ENCODE measurements at regions of chr7 and their contacts with region 1.

Region 1: DNA sequence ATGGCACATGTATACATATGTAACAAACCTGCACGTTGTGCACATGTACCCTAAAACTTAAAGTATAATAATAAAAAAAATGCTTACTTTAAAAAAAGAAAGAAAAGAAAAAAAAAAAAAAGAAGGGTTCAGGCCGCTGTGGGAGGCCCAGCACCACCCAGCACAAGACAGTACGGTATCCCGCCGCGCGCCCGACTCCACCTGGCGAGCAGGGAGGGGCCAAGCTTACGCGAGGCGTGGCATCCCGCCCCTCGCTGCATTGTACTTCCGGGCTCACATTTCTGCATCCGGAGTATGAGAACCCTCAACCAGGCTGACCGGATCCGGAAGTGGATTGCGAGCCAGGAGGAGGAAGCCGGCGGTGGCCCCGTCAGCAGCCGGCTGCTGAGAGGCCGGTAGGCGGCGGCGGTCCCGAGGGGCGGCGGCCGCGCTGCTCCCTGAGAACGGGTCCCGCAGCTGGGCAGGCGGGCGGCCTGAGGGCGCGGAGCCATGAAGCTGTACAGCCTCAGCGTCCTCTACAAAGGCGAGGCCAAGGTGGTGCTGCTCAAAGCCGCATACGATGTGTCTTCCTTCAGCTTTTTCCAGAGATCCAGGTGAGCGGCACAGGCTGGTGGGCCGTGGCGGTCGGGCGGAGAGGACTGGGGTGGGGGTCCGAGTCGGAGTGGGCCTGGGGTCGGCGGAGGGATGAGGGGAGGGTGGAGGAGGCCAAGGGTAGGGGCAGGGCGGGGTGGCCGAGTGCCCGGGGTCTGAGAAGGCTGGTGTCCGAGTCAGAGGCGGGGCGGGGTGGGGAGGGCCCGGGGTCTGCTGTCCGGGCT is at the start of gene YKT6:
- H3K4me3 ChIP-seq: peak within 1 kb of the TSS; percentile 100
- H3K27ac ChIP-seq: peak within 1 kb of the TSS; percentile 62; the same call in 1 of the 2 replicates
- H3K4me1 ChIP-seq: no peaks in the 10 kb centered on the region
- CTCF ChIP-seq: peak; percentile 85

Region 2: GRCh38 chr7:44065436-44066118 is 135.3 kb before region 1 on chr7 and contains the start of gene PGAM2:
- CTCF ChIA-PET with region 1: interaction called, 14 read pairs
- POLR2A ChIA-PET with region 1: interaction called, 6 read pairs
- H3K4me3 ChIP-seq: no peak within 1 kb of the TSS
- H3K27ac ChIP-seq: no peak within 1 kb of the TSS
- H3K4me1 ChIP-seq: no peaks in the 10 kb centered on the region
- CTCF ChIP-seq: no peak

Region 3: DNA sequence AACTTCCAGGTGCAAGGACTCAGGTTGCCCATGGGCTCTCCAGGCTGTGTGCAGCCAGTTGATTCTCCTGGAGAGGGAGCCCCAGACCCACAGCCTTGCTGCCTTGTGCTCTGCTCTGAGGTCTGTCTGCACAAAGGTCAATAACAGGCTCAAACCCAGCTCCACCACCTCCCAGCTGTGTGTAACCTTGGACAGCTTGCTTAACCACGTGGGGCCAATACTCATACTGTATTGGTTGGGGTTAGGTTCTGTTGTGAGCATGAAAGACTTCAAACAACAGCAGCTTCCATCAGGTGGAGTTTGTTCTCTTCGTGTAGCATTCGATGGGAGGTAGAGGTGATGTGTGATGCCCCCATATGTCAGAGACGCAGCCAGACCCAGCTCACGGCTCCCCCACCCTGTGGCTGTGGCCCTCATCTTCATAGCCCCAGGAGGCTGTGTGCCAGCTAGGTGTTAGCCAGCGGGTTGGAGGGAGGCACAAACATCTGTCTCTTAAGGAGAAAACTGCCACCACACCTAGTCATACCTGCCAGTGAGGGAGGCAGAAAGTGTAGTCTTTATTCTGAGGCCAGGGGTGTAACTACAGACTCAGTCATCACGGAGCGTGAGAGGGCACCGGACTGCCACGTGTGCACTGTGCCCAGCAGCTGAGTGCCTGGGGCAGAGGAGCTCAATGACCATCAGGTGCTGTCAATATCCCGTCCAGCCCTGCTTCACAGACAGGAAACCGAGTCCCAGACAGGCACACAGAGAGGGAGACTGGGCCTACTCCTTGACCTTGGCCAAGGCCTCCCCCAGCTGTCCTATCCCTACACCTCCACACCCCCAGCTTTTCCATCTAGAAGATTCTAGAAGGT is 69.5 kb before region 1 on chr7:
- CTCF ChIA-PET with region 1: interaction called, 16 read pairs
- POLR2A ChIA-PET with region 1: no interaction called
- H3K4me3 ChIP-seq: no peak overlapping the region
- H3K27ac ChIP-seq: no peak overlapping the region
- H3K4me1 ChIP-seq: no peaks in the 10 kb centered on the region
- CTCF ChIP-seq: peak; percentile 48; the same call in 1 of the 2 replicates

Region 4: GRCh38 chr7:44213877-44214388 is 13.1 kb after region 1 on chr7:
- CTCF ChIA-PET with region 1: interaction called, 13 read pairs
- POLR2A ChIA-PET with region 1: interaction called, 4 read pairs
- H3K4me3 ChIP-seq: no peak overlapping the region
- H3K27ac ChIP-seq: no peak overlapping the region
- H3K4me1 ChIP-seq: no peaks in the 10 kb centered on the region
- CTCF ChIP-seq: no peak

Measured in HEK293 (cell line).